ENCODE measurements at regions of chr12 and their contacts with region 1.

Region 1: GRCh38 chr12:98939350-98939749 is 294.3 kb downstream of the APAF1 start:
- DNase-seq: peak; percentile 74

Region 2: GRCh38 chr12:98698603-98699463 is 240.5 kb before region 1 on chr12:
- in situ Hi-C with region 1: no loop called
- DNase-seq: peak; percentile 84

Region 3: DNA sequence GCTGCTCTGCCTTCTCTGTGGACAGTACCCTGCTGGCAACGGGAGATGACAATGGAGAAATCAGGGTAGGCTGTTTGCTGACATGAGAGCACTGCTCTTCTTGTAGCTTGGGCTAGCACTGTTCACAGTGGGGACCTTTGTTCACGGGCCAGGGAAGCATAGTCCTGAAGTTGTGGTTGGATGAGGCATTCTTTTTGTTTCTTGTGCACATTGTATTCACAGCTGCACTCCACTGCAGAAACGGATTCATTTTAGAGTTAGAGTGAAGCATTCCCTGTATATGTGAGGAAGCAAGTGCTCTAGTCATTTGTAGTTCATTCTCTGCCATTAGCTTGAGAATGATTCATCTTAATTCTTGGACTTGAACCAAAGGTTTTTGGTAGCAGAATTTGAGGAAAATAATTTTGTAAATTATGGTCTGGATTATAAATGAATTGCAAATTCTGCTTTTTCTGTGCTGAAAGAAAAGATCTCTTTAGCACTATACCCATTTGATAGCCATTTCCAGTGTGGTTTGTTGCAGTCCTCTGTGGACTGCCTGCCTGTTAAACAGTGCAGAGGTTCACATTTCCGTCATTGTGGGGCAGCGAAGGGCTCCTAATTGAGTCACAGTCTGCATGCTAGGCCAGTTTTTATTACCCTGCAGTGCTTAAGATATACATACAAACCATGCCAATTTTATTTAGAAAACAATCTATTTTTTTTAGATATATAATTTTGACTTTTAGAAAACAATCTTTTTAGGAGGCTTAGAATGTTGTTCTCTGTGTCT is 213.7 kb before region 1 on chr12:
- in situ Hi-C with region 1: loop called (anchors 25 kb)
- DNase-seq: peak; percentile 82

Region 4: DNA sequence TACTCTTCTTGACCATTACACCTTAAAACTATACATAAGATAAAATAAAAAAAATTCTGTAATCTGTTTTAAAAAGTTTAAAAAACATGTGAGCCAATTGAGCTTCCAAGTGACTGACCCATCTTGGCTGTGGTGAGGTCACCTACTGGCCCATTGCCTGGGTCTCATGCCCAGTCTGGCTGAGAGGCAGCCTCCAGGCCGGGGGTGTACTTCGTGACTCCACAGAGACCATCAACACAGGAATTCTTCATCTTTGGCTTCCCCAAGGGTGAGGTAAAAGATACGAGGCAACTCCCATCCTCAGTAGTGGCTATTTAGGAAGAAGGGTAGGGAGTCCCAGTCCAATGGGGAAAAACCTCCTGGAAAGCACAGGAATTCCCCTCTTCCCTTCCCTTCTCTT is 181.0 kb before region 1 on chr12:
- in situ Hi-C with region 1: no loop called
- DNase-seq: no peak

Region 5: DNA sequence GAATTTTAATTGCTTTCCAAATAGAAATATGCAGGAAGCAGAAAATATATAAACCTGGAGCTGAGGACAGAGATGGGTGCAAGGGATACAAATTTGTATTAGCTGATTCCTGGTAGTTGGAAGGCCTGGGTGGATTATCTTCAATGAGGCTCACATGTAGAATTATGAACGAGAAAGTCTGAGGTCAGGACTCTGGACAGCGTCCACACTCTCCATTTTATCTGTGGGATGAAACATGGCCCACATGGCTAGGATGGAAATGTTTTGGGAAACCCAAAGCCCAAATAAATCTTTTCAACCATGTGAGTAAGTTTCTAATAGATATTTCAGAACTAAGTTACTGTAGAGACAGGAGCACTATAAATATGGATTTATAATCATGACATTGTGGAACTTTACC is 38.2 kb before region 1 on chr12:
- in situ Hi-C with region 1: no loop called
- DNase-seq: no peak

Measured in SK-MEL-5 (cell line).